ENCODE measurements at regions of chr5 and their contacts with region 1.

Region 1: DNA sequence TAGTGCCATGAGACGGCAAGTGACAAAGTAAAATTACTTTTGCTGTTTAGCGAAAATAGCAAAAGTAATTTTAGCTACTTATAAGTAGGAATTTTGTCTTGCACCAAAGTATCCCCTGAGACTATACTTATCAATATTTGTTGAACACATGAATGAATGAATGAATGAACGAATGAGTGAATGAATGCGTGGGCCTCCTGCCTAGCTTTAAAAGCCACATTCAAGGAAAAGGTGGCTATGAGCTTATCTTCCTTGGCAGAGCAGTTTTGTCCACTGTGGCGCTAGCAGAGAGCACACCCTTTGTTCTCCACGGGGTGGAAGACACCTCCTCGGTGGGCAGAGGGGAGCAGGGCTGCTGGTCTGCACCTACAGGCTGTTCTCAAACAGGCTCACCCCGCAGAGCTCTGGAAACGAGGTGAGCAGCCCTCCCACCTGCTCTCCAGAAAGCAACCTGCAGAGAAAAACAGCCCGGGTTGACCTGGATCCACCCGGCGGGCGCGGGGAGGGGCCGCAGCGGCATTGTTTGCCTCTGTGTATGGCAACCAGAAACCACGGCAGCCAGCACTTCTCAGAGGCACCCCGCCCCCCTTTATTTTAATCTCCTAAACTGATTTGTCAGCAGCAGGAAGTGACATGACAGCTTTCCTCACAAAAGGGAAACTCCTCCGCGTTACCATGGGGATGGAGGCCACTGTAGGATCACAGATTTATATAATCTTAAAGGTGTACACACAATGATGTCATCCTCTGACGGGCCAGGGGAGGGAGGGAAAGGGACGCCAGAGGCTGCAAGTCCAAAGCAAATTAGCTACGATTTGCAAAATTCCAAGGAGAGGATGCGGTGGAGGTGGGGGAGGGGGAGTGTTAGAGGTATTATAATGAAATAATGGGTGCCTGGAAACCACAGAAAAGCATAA is 5.9 kb downstream of the DUSP1 start:
- DNase-seq: peak; percentile 92 to 95 (median 95)
- ATAC-seq: peak; percentile 76 to 78
- H3K4me3 ChIP-seq: peak overlapping the region; percentile 79
- H3K27ac ChIP-seq: peak overlapping the region; percentile 100
- H3K4me1 ChIP-seq: peaks cover 2% of the 10 kb centered on the region
- H3K27me3 ChIP-seq: no peaks in the 10 kb centered on the region

Region 2: DNA sequence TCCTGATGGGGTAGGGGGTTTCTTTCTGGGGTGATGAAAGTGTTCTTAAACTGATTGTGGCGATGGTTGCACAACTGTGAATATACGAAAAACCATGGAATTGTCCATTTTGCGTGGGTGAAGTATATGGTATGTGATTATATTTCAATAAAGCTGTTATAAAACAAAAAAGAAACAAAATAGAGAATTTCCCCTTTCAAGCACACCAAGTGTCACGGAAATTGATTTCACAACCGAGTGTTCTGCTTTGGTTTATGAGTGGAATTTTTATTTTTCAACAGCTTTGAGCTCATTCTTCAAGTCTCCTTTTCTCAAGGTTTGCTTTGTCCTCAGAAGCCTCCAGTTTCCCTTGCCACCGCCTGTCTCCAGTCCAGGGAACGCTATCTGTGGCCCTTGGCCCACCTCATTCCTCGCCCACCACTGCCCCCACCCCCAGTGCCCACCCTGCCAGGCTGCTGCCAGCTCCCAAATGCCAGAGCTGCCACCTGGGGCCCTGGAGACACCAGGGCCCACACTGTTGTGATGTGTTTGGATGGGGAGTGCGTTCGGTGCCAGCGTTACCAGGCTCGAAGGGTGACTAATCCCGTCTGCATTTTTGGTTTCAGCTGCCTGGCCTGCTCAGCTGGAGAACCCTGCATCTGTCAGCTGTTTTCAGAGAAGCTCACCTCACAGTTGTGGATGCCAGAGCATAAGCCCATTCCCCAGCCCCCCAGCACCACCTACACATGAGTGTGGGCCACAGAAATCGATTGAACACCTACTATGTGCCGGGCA is 24.5 kb before region 1 on chr5:
- intact Hi-C with region 1: no loop called
- DNase-seq: peak; percentile 81 to 86 (median 86)
- ATAC-seq: peak; percentile 89 to 91
- H3K4me3 ChIP-seq: no peak overlapping the region
- H3K27ac ChIP-seq: peak overlapping the region; percentile 68
- H3K4me1 ChIP-seq: no peaks in the 10 kb centered on the region
- H3K27me3 ChIP-seq: no peaks in the 10 kb centered on the region

Region 3: GRCh38 chr5:172870291-172870714 is 105.2 kb after region 1 on chr5:
- intact Hi-C with region 1: loop called in 1 of 4 experiments (anchors 5 kb)
- DNase-seq: peak; percentile 63 to 65 (median 64)
- ATAC-seq: peak; percentile 1 to 46
- H3K4me3 ChIP-seq: no peak overlapping the region
- H3K27ac ChIP-seq: peak overlapping the region; percentile 96
- H3K4me1 ChIP-seq: peaks cover 49% of the 10 kb centered on the region
- H3K27me3 ChIP-seq: no peaks in the 10 kb centered on the region

Region 4: DNA sequence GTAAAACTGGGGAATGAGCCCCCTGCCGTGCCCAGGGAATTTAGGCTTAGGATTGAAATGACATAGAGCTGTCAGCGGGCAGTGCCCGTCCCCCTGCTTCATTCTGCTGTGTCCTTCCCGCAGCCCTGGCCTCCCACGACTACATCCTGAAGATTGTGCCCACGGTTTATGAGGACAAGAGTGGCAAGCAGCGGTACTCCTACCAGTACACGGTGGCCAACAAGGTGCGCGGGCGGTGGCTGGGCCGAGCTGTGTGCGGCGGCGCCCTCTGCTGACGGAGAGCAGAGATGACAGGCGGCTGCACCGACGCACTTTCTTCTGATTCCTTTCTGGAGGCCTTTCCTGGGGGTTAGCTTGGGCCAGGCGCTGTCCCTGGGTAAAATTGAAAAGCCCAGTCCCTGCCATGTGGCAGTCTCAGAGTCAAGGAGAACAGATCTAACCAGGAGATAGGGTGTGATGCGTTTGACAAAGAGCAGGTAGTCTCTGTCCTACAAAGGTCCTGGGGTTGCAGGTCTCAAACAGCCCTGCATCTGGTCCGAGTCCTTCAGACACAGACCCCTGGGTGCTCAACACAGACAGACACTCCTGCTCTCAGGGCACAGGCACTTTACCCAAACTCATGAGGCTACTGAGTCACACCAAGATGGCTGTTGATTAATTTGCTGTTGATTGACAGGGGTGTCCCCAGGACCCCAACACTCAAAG is 167.4 kb after region 1 on chr5:
- intact Hi-C with region 1: loop called in 2 of 4 experiments (anchors 5 kb)
- DNase-seq: peak; percentile 73 to 90 (median 88)
- ATAC-seq: peak; percentile 78 to 80
- H3K4me3 ChIP-seq: no peak overlapping the region
- H3K27ac ChIP-seq: peak overlapping the region; percentile 31
- H3K4me1 ChIP-seq: peaks cover 5% of the 10 kb centered on the region
- H3K27me3 ChIP-seq: no peaks in the 10 kb centered on the region

Region 5: DNA sequence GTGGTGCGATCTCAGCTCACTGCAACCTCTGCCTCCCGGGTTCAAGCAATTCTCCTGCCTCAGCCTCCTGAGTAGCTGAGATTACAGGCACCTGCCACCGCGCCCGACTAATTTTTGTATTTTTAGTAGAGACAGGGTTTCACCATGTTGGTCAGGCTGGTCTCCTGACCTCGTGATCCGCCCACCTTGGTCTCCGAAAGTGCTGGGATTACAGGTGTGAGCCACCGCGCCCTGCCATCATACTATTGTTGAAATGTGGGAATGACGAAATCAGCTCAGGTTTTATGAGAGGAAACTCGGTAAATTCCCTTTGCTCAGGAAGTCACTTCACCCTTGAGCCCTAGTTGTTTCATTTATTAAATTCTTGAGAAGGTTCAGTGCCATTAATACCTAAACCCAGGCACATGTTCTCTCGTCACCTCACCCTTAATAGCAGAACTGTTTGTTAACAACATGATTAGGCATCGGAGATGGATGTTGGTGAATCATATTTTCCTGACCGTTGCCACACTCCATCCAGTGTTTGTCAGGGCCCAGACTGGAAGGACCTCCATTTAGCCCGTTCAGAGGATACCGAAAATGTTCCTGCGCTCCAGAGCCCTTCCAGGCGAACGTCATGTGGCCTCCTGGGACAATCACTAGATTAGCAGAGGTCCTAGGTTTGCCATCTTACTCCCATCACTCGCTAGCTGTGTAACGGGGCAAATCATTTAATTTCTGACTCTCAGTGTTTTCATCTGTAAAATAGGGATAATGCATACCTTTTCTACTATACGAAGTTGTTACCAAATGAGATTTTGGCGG is 271.0 kb after region 1 on chr5:
- intact Hi-C with region 1: no loop called
- DNase-seq: no peak
- ATAC-seq: no peak
- H3K4me3 ChIP-seq: no peak overlapping the region
- H3K27ac ChIP-seq: peak overlapping the region; percentile 42
- H3K4me1 ChIP-seq: no peaks in the 10 kb centered on the region
- H3K27me3 ChIP-seq: no peaks in the 10 kb centered on the region

Measured in right cardiac atrium (tissue), 5 donors.